ENCODE measurements at regions of chr10 and their contacts with region 1.

Region 1: GRCh38 chr10:34637418-34637911 is 177.6 kb downstream of the PARD3 start:
- DNase-seq: peak; percentile 63
- ATAC-seq: peak; percentile 57
- H3K4me3 Mint-ChIP-seq: no peak overlapping the region
- H3K27ac Mint-ChIP-seq: no peak overlapping the region
- H3K4me1 Mint-ChIP-seq: no peaks in the 10 kb centered on the region
- H3K27me3 Mint-ChIP-seq: no peaks in the 10 kb centered on the region

Region 2: DNA sequence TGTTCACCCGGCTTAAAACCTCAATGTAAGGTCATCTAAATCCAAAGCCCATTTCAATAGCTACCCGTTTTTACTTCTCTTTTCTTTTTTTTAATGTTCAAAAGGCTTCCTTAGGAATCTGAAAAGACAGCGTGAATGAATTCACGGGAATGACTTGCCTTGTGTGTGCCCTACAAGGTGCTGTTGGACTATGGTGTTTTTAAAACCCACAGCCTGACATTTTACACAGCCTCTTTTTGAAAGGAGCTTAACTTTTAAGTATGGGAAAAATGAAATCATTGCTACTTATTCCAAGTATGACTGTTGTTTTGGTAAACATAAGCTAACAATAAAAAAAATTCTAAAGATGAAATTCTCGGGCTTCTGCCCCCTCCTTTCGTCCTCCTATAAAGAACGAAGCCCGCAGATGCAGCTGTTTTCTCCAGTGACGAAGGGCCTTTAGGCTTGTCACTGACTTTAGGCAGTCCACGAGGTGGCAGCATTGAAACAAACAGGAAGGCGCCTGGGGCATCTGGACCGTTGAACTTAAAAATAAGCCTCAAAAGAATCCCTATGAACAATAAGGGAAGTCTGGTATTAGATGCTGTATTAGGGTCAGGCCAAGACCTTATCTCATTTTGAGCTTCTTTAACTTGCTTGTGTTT is 1444.3 kb before region 1 on chr10:
- CTCF ChIA-PET with region 1: interaction called, 23 read pairs
- POLR2A ChIA-PET with region 1: no interaction called
- DNase-seq: peak; percentile 77
- ATAC-seq: peak; percentile 80
- H3K4me3 Mint-ChIP-seq: no peak overlapping the region
- H3K27ac Mint-ChIP-seq: no peak overlapping the region
- H3K4me1 Mint-ChIP-seq: no peaks in the 10 kb centered on the region
- H3K27me3 Mint-ChIP-seq: peaks cover 21% of the 10 kb centered on the region

Region 3: DNA sequence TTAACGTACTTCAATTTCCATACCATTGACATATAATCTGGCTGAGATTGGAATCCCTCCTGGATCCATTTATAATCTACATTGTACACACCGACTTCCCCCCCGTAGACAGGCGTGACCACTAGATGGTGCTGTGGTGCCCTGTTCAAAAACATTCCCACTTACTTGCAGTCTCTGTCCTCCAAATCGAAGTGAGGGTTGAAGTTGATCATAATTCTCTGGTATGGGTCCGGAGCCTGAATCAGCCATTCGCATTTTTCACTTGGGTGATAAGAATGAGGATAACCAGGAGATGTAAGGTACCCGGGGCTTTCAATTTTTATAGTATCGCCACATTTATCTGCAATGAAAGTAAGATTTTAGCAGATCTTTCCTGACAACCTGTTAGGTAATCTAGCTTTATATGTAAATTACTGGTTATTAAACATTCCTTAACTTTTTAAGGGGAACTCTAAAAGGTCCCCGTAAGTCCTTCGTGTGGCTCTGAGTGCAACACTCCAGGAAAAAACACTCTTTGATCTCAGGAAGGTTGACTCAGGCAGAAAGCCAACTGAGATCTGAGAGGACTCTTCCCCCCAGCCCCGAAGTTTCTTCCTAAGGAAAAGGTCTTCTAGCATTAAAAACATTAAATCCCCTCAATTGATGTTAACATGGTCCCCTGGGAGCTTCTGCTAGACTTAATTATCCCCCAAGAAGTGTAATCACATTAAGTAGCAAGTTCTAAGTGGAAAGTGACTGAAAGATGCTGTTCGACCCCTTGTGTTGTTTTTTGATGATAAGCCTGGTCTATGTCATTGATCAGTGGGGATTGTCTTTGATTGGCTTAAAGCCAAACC is 1306.7 kb before region 1 on chr10:
- CTCF ChIA-PET with region 1: interaction called, 27 read pairs
- POLR2A ChIA-PET with region 1: no interaction called
- DNase-seq: peak; percentile 82
- ATAC-seq: peak; percentile 59
- H3K4me3 Mint-ChIP-seq: no peak overlapping the region
- H3K27ac Mint-ChIP-seq: no peak overlapping the region
- H3K4me1 Mint-ChIP-seq: peaks cover 20% of the 10 kb centered on the region
- H3K27me3 Mint-ChIP-seq: peaks cover 61% of the 10 kb centered on the region

Region 4: DNA sequence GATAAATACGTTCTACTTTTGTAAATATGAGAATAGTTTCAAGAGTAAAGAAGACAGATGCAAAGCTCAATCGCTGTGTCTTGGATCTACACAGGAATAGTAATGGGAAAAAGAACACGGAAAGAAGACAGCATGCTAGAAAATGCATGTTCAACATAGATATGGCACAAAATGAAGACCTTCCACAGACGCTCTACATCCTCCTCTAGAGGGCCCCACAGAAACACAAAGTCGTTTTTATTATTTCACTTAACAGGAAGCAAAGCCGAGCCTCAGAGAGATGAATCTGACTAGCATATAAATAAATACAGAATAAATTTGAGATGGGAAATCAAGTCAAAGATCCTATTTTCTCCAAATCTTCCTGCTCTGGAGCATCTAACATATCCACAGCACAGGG is 114.9 kb before region 1 on chr10:
- CTCF ChIA-PET with region 1: interaction called, 13 read pairs
- POLR2A ChIA-PET with region 1: no interaction called
- DNase-seq: no peak
- ATAC-seq: no peak
- H3K4me3 Mint-ChIP-seq: peak overlapping the region; percentile 6
- H3K27ac Mint-ChIP-seq: no peak overlapping the region
- H3K4me1 Mint-ChIP-seq: no peaks in the 10 kb centered on the region
- H3K27me3 Mint-ChIP-seq: no peaks in the 10 kb centered on the region

Region 5: GRCh38 chr10:34612446-34612845 is 25.0 kb before region 1 on chr10:
- CTCF ChIA-PET with region 1: interaction called, 12 read pairs
- POLR2A ChIA-PET with region 1: no interaction called
- DNase-seq: no peak
- ATAC-seq: no peak
- H3K4me3 Mint-ChIP-seq: no peak overlapping the region
- H3K27ac Mint-ChIP-seq: no peak overlapping the region
- H3K4me1 Mint-ChIP-seq: no peaks in the 10 kb centered on the region
- H3K27me3 Mint-ChIP-seq: no peaks in the 10 kb centered on the region

Region 6: DNA sequence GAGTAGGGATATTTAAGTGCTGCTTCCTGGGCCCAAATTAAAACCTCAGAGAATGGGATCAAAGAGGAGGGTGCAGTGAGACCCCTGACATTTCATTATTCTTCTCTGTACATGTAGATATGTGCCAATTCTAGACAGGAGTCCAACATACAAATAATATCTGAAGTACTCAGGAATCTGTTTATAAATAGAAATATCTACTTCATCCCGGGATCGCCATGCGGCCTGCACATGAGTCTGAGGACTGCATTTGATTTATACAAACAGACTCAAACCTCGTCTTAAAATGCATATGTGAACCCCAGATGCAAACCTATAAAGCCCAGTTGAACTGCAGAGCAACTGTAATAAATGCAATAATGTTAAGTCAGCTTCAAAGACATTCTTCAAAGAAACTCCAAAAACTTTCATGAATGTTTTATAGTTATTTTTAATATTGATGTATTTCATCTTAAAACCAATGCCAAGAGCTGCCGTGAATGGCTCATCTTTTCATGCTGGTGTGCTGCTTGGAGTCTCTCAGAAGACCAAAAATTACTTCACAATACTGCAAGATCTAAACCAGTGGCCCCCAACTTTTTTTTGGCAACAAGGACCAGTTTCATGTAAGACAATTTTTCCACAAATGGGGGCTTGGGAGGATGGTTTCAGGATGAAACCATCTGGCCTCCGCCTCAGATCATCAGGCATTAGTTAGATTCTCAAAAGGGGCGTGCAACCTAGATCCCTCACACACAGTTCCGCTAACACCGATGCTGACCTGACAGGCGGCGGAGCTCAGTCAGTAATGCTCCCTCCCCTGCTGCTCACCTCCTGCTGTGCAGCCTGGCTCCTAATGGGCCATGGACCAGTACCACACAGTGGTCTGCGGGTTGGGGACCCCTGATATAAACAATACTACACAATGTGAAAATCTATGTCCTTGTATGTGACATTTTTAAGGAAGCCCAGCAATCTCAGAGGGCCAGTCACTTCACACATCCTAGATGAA is 10.7 kb after region 1 on chr10:
- CTCF ChIA-PET with region 1: interaction called, 24 read pairs
- POLR2A ChIA-PET with region 1: no interaction called
- DNase-seq: no peak
- ATAC-seq: no peak
- H3K4me3 Mint-ChIP-seq: no peak overlapping the region
- H3K27ac Mint-ChIP-seq: no peak overlapping the region
- H3K4me1 Mint-ChIP-seq: no peaks in the 10 kb centered on the region
- H3K27me3 Mint-ChIP-seq: no peaks in the 10 kb centered on the region

Region 7: DNA sequence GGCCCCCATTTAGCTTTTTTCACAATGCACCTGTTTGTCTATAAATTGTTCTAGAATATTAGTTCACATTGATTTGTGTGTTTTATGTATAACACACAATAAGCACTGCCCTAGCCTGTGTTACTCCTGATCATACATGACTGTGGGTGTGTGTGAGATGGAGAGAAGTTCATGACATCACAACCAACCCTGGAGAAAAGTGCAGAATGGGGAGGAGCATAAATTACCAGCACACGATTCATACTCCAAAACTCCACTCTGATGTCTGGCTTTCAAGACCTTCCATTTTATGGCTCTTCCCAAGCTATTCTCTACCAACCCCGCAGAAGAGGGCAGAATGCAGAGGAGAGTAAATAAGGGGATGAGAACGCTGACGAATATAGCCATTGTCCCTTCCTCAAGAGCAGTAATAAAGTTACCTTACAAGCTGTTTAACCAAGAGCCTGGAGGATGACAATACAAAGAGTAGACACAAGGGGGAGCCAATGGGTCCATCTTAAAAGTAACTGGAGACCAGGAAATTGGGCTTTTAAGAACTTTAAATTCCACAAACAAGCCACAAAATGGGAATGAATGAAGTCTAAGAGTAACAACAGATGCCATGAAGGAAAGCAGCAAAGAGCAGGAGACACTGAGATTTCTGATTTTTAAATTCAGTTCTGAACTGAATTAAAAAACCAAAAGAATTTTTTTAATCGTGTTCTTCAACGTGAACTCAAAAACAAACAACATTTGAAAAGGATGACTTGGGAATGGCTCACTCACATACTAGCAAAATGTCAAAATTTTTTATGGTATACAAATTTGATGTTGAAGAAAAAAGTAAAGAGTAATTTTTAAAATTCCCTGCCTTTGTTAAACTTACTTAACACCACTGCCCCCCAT is 18.1 kb after region 1 on chr10:
- CTCF ChIA-PET with region 1: interaction called, 18 read pairs
- POLR2A ChIA-PET with region 1: no interaction called
- DNase-seq: peak; percentile 54
- ATAC-seq: no peak
- H3K4me3 Mint-ChIP-seq: no peak overlapping the region
- H3K27ac Mint-ChIP-seq: no peak overlapping the region
- H3K4me1 Mint-ChIP-seq: no peaks in the 10 kb centered on the region
- H3K27me3 Mint-ChIP-seq: peaks cover 3% of the 10 kb centered on the region

Region 8: DNA sequence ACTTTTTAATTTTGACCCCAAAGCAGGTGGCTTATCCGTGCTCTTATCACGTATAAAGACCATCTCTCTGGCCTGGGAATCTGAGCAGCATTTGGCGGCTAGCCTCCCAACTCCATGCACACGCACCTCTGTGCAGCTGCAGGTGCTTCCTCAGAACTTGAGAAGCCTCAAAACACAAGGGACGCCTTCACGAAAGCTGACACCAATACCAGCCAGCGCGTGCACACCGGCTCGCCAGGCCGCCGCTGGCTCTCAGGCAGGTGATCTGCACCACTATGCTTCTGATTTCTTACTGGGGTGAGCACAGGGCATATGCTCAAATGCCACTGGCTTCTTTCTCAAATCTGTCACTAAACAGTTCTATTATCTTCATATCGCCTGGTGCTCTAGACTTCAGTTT is 32.6 kb after region 1 on chr10:
- CTCF ChIA-PET with region 1: no interaction called
- POLR2A ChIA-PET with region 1: no interaction called
- DNase-seq: no peak
- ATAC-seq: no peak
- H3K4me3 Mint-ChIP-seq: no peak overlapping the region
- H3K27ac Mint-ChIP-seq: no peak overlapping the region
- H3K4me1 Mint-ChIP-seq: no peaks in the 10 kb centered on the region
- H3K27me3 Mint-ChIP-seq: peaks cover 3% of the 10 kb centered on the region

Region 9: DNA sequence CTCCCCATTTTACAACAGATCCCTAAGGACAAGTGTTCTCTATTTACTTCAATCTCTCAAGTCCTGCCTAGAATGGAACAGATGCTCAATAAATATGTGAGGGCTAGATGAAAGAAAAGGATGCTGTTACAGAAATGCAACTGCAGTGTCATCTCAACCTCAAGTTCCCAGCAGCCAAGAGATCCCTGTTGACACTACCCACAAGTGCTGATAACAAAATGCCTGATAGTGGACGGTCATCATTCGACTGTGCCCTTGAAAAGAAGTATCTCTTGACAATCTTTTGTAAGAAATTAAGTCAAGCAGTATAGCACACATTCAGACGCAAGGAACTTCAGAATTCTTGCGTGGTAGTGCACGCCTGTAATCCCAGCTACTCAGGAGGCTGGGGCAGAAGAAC is 44.5 kb after region 1 on chr10:
- CTCF ChIA-PET with region 1: no interaction called
- POLR2A ChIA-PET with region 1: no interaction called
- DNase-seq: no peak
- ATAC-seq: no peak
- H3K4me3 Mint-ChIP-seq: no peak overlapping the region
- H3K27ac Mint-ChIP-seq: no peak overlapping the region
- H3K4me1 Mint-ChIP-seq: no peaks in the 10 kb centered on the region
- H3K27me3 Mint-ChIP-seq: no peaks in the 10 kb centered on the region